ENCODE measurements at regions of chr4 and their contacts with region 1.

Region 1: DNA sequence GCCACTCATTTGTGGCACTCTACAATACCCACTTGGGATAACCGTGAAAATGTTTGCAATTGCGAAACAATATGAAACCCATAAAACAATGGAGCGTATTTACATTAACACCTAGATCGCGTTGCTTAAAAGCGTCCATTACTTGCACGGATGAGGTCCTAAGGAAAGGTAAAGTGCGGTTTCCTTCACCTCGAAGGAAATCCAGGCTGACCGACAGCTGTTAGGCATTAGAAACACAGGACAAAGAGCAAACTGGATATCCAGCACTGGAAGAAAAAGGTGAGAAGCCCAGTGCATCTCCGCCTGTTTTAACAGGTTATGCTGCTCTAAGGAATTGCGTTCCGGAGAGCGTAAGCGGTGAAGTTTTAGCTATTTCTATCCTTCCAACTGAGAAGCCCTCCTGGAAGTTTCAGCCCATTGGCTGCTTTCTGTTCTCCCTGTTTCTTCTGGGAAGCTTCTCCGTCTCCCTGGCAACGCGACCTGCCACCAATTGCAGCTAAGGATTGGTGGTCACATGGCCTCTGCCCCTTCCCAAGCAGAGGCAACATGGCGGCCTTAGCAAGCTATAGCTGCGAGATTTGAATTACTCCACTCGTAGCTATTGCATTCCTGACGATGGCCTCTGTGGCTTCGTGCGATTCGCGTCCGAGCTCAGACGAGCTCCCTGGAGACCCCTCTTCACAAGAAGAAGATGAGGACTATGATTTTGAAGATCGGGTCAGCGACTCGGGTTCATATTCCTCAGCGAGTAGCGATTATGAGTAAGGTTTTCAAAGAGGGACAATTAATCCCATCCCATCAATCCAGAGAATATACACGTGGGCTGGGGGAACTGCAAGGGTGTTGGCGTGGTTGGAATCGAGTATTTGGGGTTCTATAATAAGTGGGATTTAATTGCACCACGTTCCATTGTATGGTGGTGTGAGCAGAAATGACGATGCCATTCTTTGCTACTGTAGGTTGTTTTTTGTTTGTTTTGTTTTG is at the start of gene INTU:
- DNase-seq: peak; percentile 87 to 97
- H3K4me3 ChIP-seq: peak within 1 kb of the TSS; percentile 60 to 79
- H3K27ac ChIP-seq: peak within 1 kb of the TSS; percentile 29 to 46
- H3K4me1 ChIP-seq: peaks cover 0 to 3% of the 10 kb centered on the region in 2 donors
- H3K27me3 ChIP-seq: no peaks in the 10 kb centered on the region
- CTCF ChIP-seq: no peak
- total RNA-seq, gene INTU: 3.1 TPM

Region 2: DNA sequence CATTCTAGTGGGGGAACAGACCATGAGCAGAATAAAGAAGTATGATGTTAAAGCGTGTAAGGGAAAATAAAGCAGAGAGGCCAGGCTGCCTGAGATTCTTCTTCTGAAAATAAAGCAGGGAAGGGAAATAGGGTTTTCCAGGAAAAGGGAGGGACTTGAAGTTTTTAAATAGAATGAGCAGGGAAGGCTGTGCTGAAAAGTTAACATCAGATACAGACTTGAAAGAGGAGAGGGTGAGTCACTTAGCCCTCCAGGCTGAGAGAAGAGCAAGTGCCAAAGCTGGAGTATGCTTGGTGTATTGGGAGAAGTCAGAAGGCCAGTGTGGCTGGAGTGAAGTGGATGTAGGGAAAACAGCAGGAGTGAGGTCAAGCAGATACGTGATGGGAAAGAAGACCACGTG is 238.0 kb after region 1 on chr4:
- intact Hi-C with region 1: loop called (anchors 10 kb)
- DNase-seq: no peak
- H3K4me3 ChIP-seq: peak overlapping the region in 1 of 2 donors; percentile 20
- H3K27ac ChIP-seq: peak overlapping the region; percentile 41 to 63
- H3K4me1 ChIP-seq: no peaks in the 10 kb centered on the region
- H3K27me3 ChIP-seq: no peaks in the 10 kb centered on the region
- CTCF ChIP-seq: no peak

Measured in ascending aorta (tissue), 2 donors.